Endothelial cell of umbilical vein (primary cell): ENCODE measurements at regions of chr3 and their contacts with region 1.

Region 1: GRCh38 chr3:48194446-48195071 is 6.3 kb upstream of the CDC25A start:
- DNase-seq: peak; percentile 63
- H3K4me3 ChIP-seq: no peak overlapping the region
- H3K27ac ChIP-seq: no peak overlapping the region
- H3K4me1 ChIP-seq: no peaks in the 10 kb centered on the region
- H3K27me3 ChIP-seq: peaks cover 0 to 5% of the 10 kb centered on the region in 2 experiments
- CTCF ChIP-seq: peak; percentile 70 to 79
- POLR2A ChIP-seq: no peak

Region 2: DNA sequence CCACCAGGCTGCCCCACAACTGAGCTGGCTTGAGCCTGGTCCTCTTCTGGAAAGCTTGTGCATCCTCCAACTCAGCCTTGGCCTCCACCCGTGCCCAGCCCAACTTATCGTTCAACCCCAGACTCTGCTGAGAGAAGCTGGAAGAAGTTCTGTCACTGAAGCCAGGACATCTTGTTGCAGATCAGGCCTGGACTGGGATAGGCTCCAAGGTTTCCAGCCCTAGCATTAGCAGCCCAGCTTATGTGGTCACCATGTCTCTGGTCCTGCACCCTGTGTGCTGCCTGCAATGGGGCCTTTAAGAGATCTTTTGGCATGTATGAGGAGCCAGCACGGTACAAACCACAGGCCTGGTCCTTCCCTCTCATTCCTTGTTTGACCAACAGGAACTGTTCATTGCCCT is 13.5 kb after region 1 on chr3:
- CTCF ChIA-PET with region 1: interaction called, 18 read pairs
- POLR2A ChIA-PET with region 1: no interaction called
- dilution Hi-C with region 1: no loop called
- intact Hi-C with region 1: no loop called
- DNase-seq: no peak
- H3K4me3 ChIP-seq: no peak overlapping the region
- H3K27ac ChIP-seq: no peak overlapping the region
- H3K4me1 ChIP-seq: no peaks in the 10 kb centered on the region
- H3K27me3 ChIP-seq: no peaks in the 10 kb centered on the region
- CTCF ChIP-seq: no peak
- POLR2A ChIP-seq: no peak

Region 3: GRCh38 chr3:48218537-48218936 is 24.0 kb after region 1 on chr3:
- CTCF ChIA-PET with region 1: no interaction called
- POLR2A ChIA-PET with region 1: no interaction called
- dilution Hi-C with region 1: no loop called
- intact Hi-C with region 1: no loop called
- DNase-seq: no peak
- H3K4me3 ChIP-seq: no peak overlapping the region
- H3K27ac ChIP-seq: no peak overlapping the region
- H3K4me1 ChIP-seq: no peaks in the 10 kb centered on the region
- H3K27me3 ChIP-seq: peaks cover 0 to 13% of the 10 kb centered on the region in 2 experiments
- CTCF ChIP-seq: no peak
- POLR2A ChIP-seq: no peak

Region 4: DNA sequence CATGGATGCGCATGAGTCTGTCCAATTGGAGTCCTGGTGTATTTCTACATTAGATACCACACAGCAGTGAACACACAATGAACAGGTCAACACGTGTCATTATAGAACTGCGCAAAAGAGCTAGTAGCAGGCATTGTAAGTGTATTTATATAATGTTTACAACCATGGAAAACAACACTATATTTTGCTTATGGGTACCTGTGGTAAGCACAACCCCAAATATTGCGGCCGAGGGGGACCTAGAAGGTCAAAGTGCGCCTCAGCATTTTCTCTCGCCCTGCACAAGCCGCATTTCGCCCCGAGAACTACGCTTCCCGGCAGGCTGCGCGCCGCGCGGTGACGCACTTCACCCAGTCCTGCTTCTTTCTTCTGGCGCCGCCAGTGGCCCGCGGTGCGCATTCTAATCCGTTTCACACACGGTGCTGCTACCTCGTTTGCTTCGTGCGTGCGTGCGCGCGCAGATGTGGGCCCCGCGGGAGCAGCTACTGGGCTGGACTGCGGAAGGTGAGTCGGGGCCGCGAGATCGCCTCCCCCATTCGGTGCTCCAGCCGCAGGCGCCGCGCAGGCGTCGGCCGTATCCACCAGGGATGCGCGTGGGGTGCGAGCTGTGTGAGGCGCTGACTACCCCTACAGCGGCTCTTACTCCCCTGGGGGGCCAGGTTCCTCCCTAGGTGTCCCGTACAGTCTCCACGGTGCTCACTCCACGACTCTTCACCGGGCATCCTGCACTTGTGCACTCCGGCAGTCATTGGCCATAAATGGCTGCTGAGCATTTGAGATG is 46.3 kb after region 1 on chr3 and contains the start of gene ZNF589:
- CTCF ChIA-PET with region 1: interaction called, 10 read pairs
- POLR2A ChIA-PET with region 1: no interaction called
- dilution Hi-C with region 1: no loop called
- intact Hi-C with region 1: no loop called
- DNase-seq: peak; percentile 96
- H3K4me3 ChIP-seq: peak within 1 kb of the TSS; percentile 72 to 94 (median 82)
- H3K27ac ChIP-seq: peak within 1 kb of the TSS; percentile 84
- H3K4me1 ChIP-seq: no peaks in the 10 kb centered on the region
- H3K27me3 ChIP-seq: no peaks in the 10 kb centered on the region
- CTCF ChIP-seq: peak; percentile 5 to 37
- POLR2A ChIP-seq: peak; percentile 93
- total RNA-seq, gene ZNF589: 12.4 and 13.4 TPM in 2 replicates

Region 5: DNA sequence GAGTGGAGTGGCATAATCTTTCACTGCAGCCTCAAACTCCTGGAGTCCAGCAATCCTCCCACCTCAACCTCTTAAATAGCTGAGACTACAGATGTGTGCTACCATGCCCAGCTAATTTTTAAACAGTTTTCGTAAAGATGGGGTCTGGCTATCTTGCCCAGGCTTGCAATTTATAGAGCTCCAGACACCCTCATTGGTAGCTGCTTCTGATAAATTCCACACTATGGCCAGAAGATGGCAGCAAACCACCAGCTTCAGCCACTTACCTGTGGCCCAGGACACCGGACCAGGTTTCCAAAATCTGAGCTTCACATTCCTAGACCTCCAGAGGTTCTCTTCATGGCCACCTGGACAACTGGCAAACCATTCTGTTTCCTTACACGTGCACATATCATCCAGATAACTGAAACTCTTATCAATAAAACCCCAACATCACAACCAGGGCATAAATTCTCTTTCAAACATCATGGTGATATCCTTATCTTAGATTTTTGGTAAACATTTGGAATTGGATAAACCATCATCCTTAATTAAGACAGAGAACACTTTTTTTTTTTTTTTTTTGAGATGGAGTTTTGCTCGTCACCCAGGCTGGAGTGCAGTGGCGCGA is 206.4 kb after region 1 on chr3:
- CTCF ChIA-PET with region 1: interaction called, 22 read pairs
- POLR2A ChIA-PET with region 1: no interaction called
- dilution Hi-C with region 1: no loop called
- intact Hi-C with region 1: no loop called
- DNase-seq: peak; percentile 52
- H3K4me3 ChIP-seq: no peak overlapping the region
- H3K27ac ChIP-seq: no peak overlapping the region
- H3K4me1 ChIP-seq: peaks cover 10% of the 10 kb centered on the region
- H3K27me3 ChIP-seq: peaks cover 1% of the 10 kb centered on the region in 2 experiments
- CTCF ChIP-seq: peak; percentile 69 to 72
- POLR2A ChIP-seq: no peak

Region 6: GRCh38 chr3:48609088-48610005 is 414.8 kb after region 1 on chr3 and contains the start of gene UQCRC1:
- CTCF ChIA-PET with region 1: no interaction called
- POLR2A ChIA-PET with region 1: no interaction called
- dilution Hi-C with region 1: no loop called
- intact Hi-C with region 1: loop called (anchors 1 kb)
- DNase-seq: peak; percentile 96
- H3K4me3 ChIP-seq: peak within 1 kb of the TSS; percentile 52 to 85 (median 73)
- H3K27ac ChIP-seq: peak within 1 kb of the TSS; percentile 9
- H3K4me1 ChIP-seq: peaks cover 13% of the 10 kb centered on the region
- H3K27me3 ChIP-seq: no peaks in the 10 kb centered on the region
- CTCF ChIP-seq: peak; percentile 52 to 84
- POLR2A ChIP-seq: peak; percentile 96
- total RNA-seq, gene UQCRC1: 184 and 186 TPM in 2 replicates